Heart left ventricle (tissue), 16 donors: ENCODE measurements at regions of chr2 and their contacts with region 1.

Region 1: GRCh38 chr2:46117379-46117778 is 179.8 kb upstream of the EPAS1 start:
- DNase-seq: no peak
- ATAC-seq: peak in 1 of 4 donors; percentile 22
- H3K4me3 ChIP-seq: no peak overlapping the region
- H3K27ac ChIP-seq: peak overlapping the region in 11 of 12 donors; percentile 71 to 90 (median 79)
- H3K4me1 ChIP-seq: peaks cover 4 to 66% (median 54%) of the 10 kb centered on the region in 12 donors
- H3K27me3 ChIP-seq: no peaks in the 10 kb centered on the region
- CTCF ChIP-seq: no peak
- POLR2A ChIP-seq: no peak

Region 2: DNA sequence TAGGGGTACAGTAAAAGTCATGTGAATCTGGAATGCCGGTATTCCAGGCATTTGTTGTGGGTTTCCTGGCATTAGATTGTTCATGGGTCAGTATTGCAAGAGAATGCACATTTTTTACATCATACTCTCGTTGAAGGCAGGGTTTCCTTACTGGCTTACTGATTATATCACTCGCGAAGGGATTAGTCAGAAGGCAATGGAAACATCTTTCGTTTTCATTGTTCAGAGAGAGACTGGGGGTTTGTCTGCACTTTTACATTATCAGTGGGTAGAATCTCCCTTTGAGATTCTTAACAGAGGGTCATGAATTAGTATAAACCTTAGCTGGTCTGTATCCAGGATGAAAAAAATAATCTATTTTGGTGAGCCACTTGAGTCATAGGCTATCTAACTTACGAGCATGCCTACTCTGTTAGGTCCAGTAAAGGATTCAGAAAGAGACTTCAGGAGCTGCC is 49.5 kb before region 1 on chr2:
- intact Hi-C with region 1: loop called in 3 of 10 experiments (anchors 2 to 10 kb)
- DNase-seq: no peak
- ATAC-seq: peak; percentile 32 to 79 (median 66)
- H3K4me3 ChIP-seq: no peak overlapping the region
- H3K27ac ChIP-seq: peak overlapping the region in 11 of 12 donors; percentile 2 to 69 (median 44)
- H3K4me1 ChIP-seq: peaks cover 0 to 42% (median 16%) of the 10 kb centered on the region in 12 donors
- H3K27me3 ChIP-seq: no peaks in the 10 kb centered on the region
- CTCF ChIP-seq: no peak
- POLR2A ChIP-seq: no peak